Uterus (tissue), 4 donors: ENCODE measurements at regions of chr16 and their contacts with region 1.

Region 1: GRCh38 chr16:27374804-27375425 is 27.1 kb upstream of the IL21R start:
- DNase-seq: peak; percentile 62 to 69
- H3K4me3 ChIP-seq: no peak overlapping the region
- H3K27ac ChIP-seq: peak overlapping the region in 1 of 2 donors; percentile 17
- H3K4me1 ChIP-seq: no peaks in the 10 kb centered on the region
- H3K27me3 ChIP-seq: no peaks in the 10 kb centered on the region
- CTCF ChIP-seq: peak; percentile 32 to 53 (median 44)
- POLR2A ChIP-seq: no peak

Region 2: GRCh38 chr16:27138266-27138665 is 236.6 kb before region 1 on chr16:
- intact Hi-C with region 1: no loop called
- DNase-seq: no peak
- H3K4me3 ChIP-seq: no peak overlapping the region
- H3K27ac ChIP-seq: no peak overlapping the region
- H3K4me1 ChIP-seq: no peaks in the 10 kb centered on the region
- H3K27me3 ChIP-seq: no peaks in the 10 kb centered on the region
- CTCF ChIP-seq: no peak
- POLR2A ChIP-seq: no peak

Region 3: GRCh38 chr16:27154705-27155521 is 220.0 kb before region 1 on chr16:
- intact Hi-C with region 1: no loop called
- DNase-seq: peak; percentile 32 to 40
- H3K4me3 ChIP-seq: no peak overlapping the region
- H3K27ac ChIP-seq: no peak overlapping the region
- H3K4me1 ChIP-seq: no peaks in the 10 kb centered on the region
- H3K27me3 ChIP-seq: no peaks in the 10 kb centered on the region
- CTCF ChIP-seq: peak; percentile 73 to 95 (median 84)
- POLR2A ChIP-seq: no peak

Region 4: DNA sequence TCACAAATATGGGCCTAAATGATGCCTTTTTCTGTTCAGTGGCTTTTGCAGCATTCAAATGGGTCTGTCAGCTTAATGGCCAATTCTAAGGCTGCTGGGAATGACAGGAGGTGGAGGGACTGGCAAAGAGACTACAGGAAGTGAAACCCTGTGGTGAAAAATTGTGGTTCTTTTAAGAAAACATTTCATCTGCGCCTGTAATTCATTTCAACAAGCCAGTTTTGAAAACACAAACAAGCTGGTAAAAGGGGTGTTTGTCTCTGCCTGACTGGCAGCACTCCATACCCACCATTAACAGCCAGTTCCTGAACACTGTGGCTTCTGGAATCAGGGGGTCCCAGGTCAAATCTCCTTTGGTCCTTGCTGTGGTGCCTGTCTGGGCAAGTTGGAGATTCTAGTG is 175.2 kb before region 1 on chr16:
- intact Hi-C with region 1: loop called (anchors 10 kb)
- DNase-seq: no peak
- H3K4me3 ChIP-seq: no peak overlapping the region
- H3K27ac ChIP-seq: no peak overlapping the region
- H3K4me1 ChIP-seq: no peaks in the 10 kb centered on the region
- H3K27me3 ChIP-seq: no peaks in the 10 kb centered on the region
- CTCF ChIP-seq: no peak
- POLR2A ChIP-seq: no peak